ENCODE measurements at regions of chr6 and their contacts with region 1.

Region 1: GRCh38 chr6:135128268-135128914 is 52.7 kb upstream of the MYB start:
- DNase-seq: peak; percentile 61 to 73 (median 70)
- H3K4me3 ChIP-seq: no peak overlapping the region
- H3K4me3 Mint-ChIP-seq: peak overlapping the region; percentile 21 to 91 (median 82)
- H3K27ac ChIP-seq: peak overlapping the region; percentile 25
- H3K27ac Mint-ChIP-seq: peak overlapping the region; percentile 90 to 98 (median 95)
- H3K4me1 ChIP-seq: peaks cover 23% of the 10 kb centered on the region
- H3K4me1 Mint-ChIP-seq: peaks cover 15 to 34% (median 30%) of the 10 kb centered on the region in 4 donors
- H3K27me3 ChIP-seq: no peaks in the 10 kb centered on the region
- H3K27me3 Mint-ChIP-seq: no peaks in the 10 kb centered on the region

Region 2: DNA sequence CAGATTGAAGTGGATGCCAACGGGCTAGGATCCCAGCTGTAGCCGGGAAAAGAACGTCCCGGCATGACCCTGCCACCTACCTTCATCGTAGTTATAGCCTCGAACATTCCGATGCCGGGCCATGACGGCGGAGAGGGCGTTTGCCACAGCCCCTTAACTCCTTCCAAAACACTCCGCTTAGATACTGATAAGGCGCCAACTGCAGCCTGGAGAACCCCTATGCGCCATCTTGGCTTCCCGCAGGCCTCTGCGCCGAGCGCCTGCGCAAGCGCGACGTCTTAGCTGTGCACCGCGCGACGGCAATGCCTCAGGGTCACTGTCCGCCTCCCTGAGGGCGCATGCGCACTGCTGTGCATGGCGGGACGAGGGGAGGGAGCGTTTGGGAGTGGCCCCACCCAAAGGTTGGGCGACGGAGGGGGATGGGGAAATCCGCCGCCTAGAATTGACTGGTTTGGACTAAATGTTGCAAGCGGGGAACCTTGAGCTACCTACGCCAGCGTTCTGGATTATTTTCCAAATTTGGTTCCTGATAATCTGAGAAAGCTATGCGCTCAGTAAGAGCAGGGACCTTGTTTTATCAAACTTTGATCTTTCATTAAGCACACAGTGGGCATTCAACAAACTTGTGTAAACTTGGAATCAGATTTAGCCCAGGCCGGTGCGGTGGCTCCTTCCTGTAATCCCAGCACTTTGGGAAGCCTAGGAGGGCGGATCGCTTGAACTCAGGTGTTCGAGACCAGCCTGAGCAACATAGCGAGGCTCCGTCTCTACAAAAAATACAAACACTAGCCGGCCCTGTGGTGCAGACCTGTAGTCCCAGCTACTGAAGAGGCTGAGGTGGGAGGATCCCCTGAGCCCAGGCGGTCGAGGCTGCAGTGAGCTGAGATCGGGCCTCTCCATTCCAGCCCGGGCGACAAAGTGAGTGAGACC is 73.6 kb before region 1 on chr6 and contains the start of gene HBS1L:
- CTCF ChIA-PET with region 1: interaction called, 7 read pairs
- POLR2A ChIA-PET with region 1: interaction called, 7 read pairs
- intact Hi-C with region 1: loop called (anchors 2 kb)
- DNase-seq: peak; percentile 95 to 97 (median 96)
- H3K4me3 ChIP-seq: peak within 1 kb of the TSS; percentile 54 to 91
- H3K4me3 Mint-ChIP-seq: peak within 1 kb of the TSS; percentile 93 to 99 (median 97)
- H3K27ac ChIP-seq: peak within 1 kb of the TSS; percentile 91
- H3K27ac Mint-ChIP-seq: peak within 1 kb of the TSS; percentile 96 to 99 (median 99)
- H3K4me1 ChIP-seq: peaks cover 37% of the 10 kb centered on the region
- H3K4me1 Mint-ChIP-seq: peaks cover 27 to 44% (median 37%) of the 10 kb centered on the region in 4 donors
- H3K27me3 ChIP-seq: no peaks in the 10 kb centered on the region
- H3K27me3 Mint-ChIP-seq: no peaks in the 10 kb centered on the region
- total RNA-seq, gene HBS1L: 63.8 to 69.9 TPM

Region 3: DNA sequence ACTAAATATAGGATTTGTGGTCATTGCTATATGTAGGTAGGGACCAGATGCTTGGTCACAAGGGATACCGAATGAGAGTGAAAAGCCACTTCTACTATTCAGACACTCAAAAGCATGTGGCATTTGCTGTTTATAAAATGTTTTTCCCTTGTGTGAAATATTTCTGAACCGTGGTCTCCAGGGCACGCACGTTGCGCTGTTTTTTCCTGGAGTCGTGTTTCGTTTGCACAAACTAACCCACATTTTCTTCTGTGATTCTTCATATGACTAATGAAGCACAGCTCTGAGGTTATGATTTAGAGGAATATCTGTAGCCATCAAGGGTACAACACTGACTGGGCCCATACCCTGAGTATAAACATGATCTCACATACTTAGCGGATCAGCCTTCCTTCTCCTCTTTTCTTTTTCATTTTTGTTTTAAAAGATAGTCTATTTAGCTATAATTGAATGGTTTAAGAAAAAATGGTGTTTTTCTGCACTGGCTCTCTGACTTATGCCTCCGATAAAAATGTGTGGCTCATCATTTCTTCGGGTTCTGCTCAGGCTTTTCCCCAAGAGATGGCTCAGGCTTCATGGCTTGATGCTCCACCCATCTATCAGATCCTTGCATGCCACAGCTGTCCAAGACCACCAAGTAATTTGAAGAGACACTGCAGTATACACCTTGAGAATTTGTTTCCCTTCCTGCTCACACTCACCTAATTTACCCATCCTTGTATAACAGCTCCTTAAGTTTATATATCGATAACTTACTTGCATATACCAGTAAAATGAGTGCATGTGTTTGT is 13.8 kb before region 1 on chr6:
- CTCF ChIA-PET with region 1: interaction called, 6 read pairs
- POLR2A ChIA-PET with region 1: interaction called, 14 read pairs
- intact Hi-C with region 1: loop called (anchors 1 kb)
- DNase-seq: no peak
- H3K4me3 ChIP-seq: no peak overlapping the region
- H3K4me3 Mint-ChIP-seq: peak overlapping the region in 5 of 8 donors; percentile 10 to 43 (median 24)
- H3K27ac ChIP-seq: no peak overlapping the region
- H3K27ac Mint-ChIP-seq: peak overlapping the region in 3 of 7 donors; percentile 6 to 38 (median 18)
- H3K4me1 ChIP-seq: peaks cover 34% of the 10 kb centered on the region
- H3K4me1 Mint-ChIP-seq: peaks cover 28 to 55% (median 36%) of the 10 kb centered on the region in 4 donors
- H3K27me3 ChIP-seq: no peaks in the 10 kb centered on the region
- H3K27me3 Mint-ChIP-seq: peaks cover 0 to 17% of the 10 kb centered on the region in 2 donors